ENCODE measurements at regions of chr12 and their contacts with region 1.

Region 1: DNA sequence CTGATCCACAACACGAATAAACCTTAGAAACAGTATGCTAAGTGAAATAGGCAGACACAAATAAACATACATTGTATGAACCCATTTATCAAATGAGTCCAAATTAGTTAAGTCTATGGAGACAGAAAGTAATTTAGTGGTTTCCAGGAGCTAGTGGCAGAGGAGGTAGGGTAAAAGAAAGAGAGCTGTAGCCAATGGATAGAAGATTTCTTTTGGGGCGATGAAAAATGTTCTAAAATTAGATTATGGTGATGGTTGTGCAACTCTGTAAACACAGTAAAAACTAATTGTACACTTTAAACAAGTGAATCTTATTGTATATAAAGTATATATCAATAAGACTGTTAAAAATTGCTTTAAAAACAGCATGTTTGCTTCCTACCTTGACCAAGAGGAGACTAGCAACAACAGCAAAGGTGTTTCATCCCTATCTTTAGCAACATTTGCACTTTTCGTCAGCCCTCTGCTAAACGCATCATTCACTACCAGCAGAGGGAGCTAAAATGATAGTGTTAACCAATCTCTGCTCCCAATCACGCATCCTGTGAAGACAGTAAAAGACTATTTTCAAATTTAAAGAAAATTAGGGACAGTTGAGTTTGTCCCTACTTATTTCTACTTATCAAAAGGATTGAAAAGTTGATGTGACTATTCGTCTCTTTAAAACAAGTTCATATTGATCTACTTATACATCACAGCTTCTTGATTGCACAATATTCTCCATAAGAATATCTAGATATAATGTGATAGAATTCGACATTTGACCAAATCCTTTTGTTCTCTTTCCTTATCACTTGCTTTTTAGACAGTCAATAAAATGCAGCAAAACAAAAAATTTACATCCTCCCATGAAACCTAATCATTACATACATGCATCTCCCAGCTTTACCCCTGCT is 24.0 kb upstream of the LGR5 start:
- DNase-seq: no peak
- H3K4me3 ChIP-seq: no peak overlapping the region
- H3K27ac ChIP-seq: no peak overlapping the region
- H3K4me1 ChIP-seq: no peaks in the 10 kb centered on the region
- H3K27me3 ChIP-seq: no peaks in the 10 kb centered on the region
- CTCF ChIP-seq: peak in 2 of 3 experiments; percentile 64 to 77; a peak in 3 of 4 replicates
- EP300 ChIP-seq: no peak
- POLR2A ChIP-seq: no peak
- RAD21 ChIP-seq: peak; percentile 83 to 85

Region 2: GRCh38 chr12:71242511-71242910 is 173.1 kb before region 1 on chr12:
- CTCF ChIA-PET with region 1: no interaction called
- POLR2A ChIA-PET with region 1: no interaction called
- DNase-seq: no peak
- H3K4me3 ChIP-seq: no peak overlapping the region
- H3K27ac ChIP-seq: no peak overlapping the region
- H3K4me1 ChIP-seq: no peaks in the 10 kb centered on the region
- H3K27me3 ChIP-seq: no peaks in the 10 kb centered on the region
- CTCF ChIP-seq: no peak
- EP300 ChIP-seq: no peak
- POLR2A ChIP-seq: no peak
- RAD21 ChIP-seq: no peak

Region 3: GRCh38 chr12:71430756-71431155 is 15.2 kb after region 1 on chr12:
- CTCF ChIA-PET with region 1: interaction called, 28 read pairs
- POLR2A ChIA-PET with region 1: no interaction called
- DNase-seq: no peak
- H3K4me3 ChIP-seq: no peak overlapping the region
- H3K27ac ChIP-seq: no peak overlapping the region
- H3K4me1 ChIP-seq: no peaks in the 10 kb centered on the region
- H3K27me3 ChIP-seq: no peaks in the 10 kb centered on the region; a peak in 1 of 7 replicates
- CTCF ChIP-seq: no peak
- EP300 ChIP-seq: no peak
- POLR2A ChIP-seq: no peak
- RAD21 ChIP-seq: no peak

Region 4: GRCh38 chr12:71551529-71551928 is 135.9 kb after region 1 on chr12:
- CTCF ChIA-PET with region 1: interaction called, 19 read pairs
- POLR2A ChIA-PET with region 1: no interaction called
- DNase-seq: no peak
- H3K4me3 ChIP-seq: no peak overlapping the region
- H3K27ac ChIP-seq: no peak overlapping the region
- H3K4me1 ChIP-seq: no peaks in the 10 kb centered on the region
- H3K27me3 ChIP-seq: no peaks in the 10 kb centered on the region
- CTCF ChIP-seq: peak in 2 of 3 experiments; percentile 27 to 38; a peak in 2 of 4 replicates
- EP300 ChIP-seq: no peak
- POLR2A ChIP-seq: no peak
- RAD21 ChIP-seq: peak; percentile 62 to 64